ENCODE measurements at regions of chr2 and their contacts with region 1.

Region 1: GRCh38 chr2:142951190-142952007 is 73.9 kb downstream of the KYNU start:
- DNase-seq: no peak
- H3K4me3 ChIP-seq: no peak overlapping the region
- H3K27ac ChIP-seq: no peak overlapping the region
- H3K4me1 ChIP-seq: peaks cover 10% of the 10 kb centered on the region
- H3K27me3 ChIP-seq: no peaks in the 10 kb centered on the region
- CTCF ChIP-seq: no peak

Region 2: DNA sequence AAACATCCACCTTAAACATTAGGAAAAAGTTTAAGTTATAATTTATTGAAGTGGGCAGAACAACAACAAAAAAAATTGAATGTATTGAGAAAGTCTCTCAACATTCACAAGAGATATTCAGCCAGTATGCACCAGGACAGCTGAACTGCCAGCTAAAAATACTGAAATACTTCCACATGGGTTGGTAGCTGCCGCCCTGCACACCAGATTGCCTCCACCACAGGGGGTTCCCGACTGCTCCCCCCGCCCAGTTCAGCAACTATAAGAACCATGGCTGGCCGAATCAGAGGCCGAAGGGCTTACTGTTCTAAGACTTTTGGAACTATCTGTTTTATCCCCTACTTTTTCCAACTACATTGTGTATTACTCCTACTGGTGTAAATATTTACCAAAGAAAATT is 670.6 kb before region 1 on chr2:
- CTCF ChIA-PET with region 1: no interaction called
- dilution Hi-C with region 1: no loop called
- in situ Hi-C with region 1: no loop called
- intact Hi-C with region 1: no loop called
- DNase-seq: no peak
- H3K4me3 ChIP-seq: no peak overlapping the region
- H3K27ac ChIP-seq: no peak overlapping the region
- H3K4me1 ChIP-seq: no peaks in the 10 kb centered on the region
- H3K27me3 ChIP-seq: no peaks in the 10 kb centered on the region
- CTCF ChIP-seq: no peak

Region 3: GRCh38 chr2:142415461-142415860 is 535.9 kb before region 1 on chr2:
- CTCF ChIA-PET with region 1: no interaction called
- dilution Hi-C with region 1: no loop called
- in situ Hi-C with region 1: no loop called
- intact Hi-C with region 1: no loop called
- DNase-seq: no peak
- H3K4me3 ChIP-seq: no peak overlapping the region
- H3K27ac ChIP-seq: no peak overlapping the region
- H3K4me1 ChIP-seq: no peaks in the 10 kb centered on the region
- H3K27me3 ChIP-seq: no peaks in the 10 kb centered on the region
- CTCF ChIP-seq: no peak

Region 4: GRCh38 chr2:142989273-142990204 is 38.1 kb after region 1 on chr2:
- CTCF ChIA-PET with region 1: no interaction called
- dilution Hi-C with region 1: no loop called
- in situ Hi-C with region 1: no loop called
- intact Hi-C with region 1: no loop called
- DNase-seq: peak; percentile 7
- H3K4me3 ChIP-seq: no peak overlapping the region
- H3K27ac ChIP-seq: no peak overlapping the region
- H3K4me1 ChIP-seq: no peaks in the 10 kb centered on the region
- H3K27me3 ChIP-seq: peaks cover 5% of the 10 kb centered on the region
- CTCF ChIP-seq: peak; percentile 45 to 49

Region 5: DNA sequence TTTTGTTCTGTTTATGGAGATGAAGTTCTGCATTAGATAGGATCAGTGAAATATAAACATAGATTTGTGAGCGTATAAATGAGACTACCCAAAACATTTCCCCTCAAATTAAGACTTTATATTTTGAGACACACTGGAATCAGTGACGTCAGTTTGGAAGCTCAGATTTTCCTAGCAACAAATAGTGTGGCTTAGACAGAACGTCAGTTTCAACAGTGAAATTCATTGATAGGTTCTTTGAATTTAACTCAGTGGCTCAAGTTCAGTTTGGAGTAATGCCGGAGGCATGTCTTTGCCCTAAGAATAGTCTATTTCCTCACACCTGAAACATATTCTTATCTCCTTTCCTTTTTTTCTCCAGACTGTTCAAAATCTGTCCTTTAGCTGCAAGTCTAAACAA is 64.3 kb after region 1 on chr2:
- CTCF ChIA-PET with region 1: no interaction called
- dilution Hi-C with region 1: no loop called
- in situ Hi-C with region 1: no loop called
- intact Hi-C with region 1: loop called (anchors 2 kb)
- DNase-seq: no peak
- H3K4me3 ChIP-seq: peak overlapping the region in 1 of 3 experiments; percentile 21
- H3K27ac ChIP-seq: no peak overlapping the region
- H3K4me1 ChIP-seq: no peaks in the 10 kb centered on the region
- H3K27me3 ChIP-seq: no peaks in the 10 kb centered on the region
- CTCF ChIP-seq: no peak

Measured in mammary epithelial cell (primary cell).